ENCODE measurements at regions of chr11 and their contacts with region 1.

Region 1: GRCh38 chr11:111283945-111284481 is 14.3 kb upstream of the POU2AF3 start:
- DNase-seq: no peak
- CTCF ChIP-seq: no peak

Region 2: DNA sequence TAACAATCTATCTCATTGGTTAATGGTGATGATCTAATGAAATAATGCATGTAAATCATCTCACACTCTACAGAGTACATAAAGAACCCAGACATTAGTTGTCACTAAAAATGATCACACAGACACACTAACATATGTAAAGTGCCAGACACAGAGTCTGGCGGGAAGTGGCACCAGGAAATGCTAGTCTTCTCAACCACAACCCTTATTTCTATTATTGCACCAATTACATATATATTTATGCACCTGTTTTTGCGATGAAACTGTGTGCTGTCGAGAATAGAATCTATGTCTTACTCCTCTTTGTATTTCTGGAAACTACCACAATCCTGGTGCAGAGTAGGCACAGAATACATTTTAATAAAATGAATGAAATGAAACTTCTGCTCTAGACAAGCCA is 11.6 kb before region 1 on chr11:
- CTCF ChIA-PET with region 1: interaction called, 13 read pairs
- POLR2A ChIA-PET with region 1: no interaction called
- DNase-seq: no peak
- CTCF ChIP-seq: no peak

Region 3: GRCh38 chr11:111299101-111300026 is 15.4 kb after region 1 on chr11:
- CTCF ChIA-PET with region 1: interaction called, 10 read pairs
- POLR2A ChIA-PET with region 1: no interaction called
- DNase-seq: peak; percentile 63
- CTCF ChIP-seq: peak; percentile 54

Region 4: DNA sequence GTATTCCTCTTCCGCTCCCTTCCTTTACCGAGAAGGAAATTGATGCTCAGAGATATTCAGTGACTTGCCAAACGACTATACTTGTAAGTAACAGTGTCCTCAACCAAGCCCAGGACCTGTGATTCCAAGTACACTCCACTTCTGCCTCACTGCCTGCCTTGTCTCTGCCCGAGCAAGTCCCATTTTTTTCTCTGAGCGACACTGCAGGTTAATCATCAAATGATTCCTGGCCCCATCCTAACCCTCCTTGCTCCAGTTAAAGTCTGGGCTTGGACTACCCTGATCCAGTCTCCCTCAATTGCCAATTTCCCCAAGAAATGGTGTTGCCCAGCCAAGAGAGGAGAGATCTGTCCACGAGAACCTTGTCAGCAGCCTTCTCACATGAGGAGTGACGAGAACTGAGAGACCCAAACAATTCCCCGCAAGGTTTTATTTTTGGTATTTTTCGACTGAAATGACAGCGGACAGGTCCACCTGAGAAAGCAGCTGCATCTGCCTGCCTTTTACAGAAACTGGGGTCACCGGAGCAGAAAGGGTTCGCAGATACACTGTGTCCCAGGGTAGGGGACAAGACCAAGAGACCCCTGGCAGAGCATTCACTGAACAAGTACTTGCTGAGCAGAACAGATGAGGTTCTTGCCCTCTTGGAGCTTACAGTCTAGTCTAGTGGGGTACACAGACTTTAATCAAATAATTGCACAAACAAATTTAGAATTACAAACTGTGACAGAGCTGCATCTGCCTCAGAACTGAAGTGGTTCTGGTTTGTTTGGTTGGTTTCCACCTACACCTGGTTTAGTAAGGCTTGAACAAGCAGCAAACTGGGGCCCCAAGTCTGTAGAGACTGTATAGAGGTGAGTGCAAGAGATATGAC is 83.6 kb after region 1 on chr11:
- CTCF ChIA-PET with region 1: interaction called, 10 read pairs
- POLR2A ChIA-PET with region 1: no interaction called
- DNase-seq: peak; percentile 72
- CTCF ChIP-seq: no peak

Region 5: GRCh38 chr11:111441443-111441842 is 157.4 kb after region 1 on chr11:
- CTCF ChIA-PET with region 1: interaction called, 122 read pairs
- POLR2A ChIA-PET with region 1: no interaction called
- DNase-seq: no peak
- CTCF ChIP-seq: no peak

Region 6: GRCh38 chr11:111454561-111455192 is 170.7 kb after region 1 on chr11:
- CTCF ChIA-PET with region 1: interaction called, 19 read pairs
- POLR2A ChIA-PET with region 1: interaction called, 7 read pairs
- DNase-seq: peak; percentile 64
- CTCF ChIP-seq: peak; percentile 11

Measured in GM10248 (cell line).